Dendritic cell treated with granulocyte-macrophage colony-stimulating factor and Interleukin-4, amounts not matched to agents 40 ng/mL and 50 ng/mL, for 4 days (primary cell): ENCODE measurements at regions of chr15 and their contacts with region 1.

Region 1: GRCh38 chr15:41989259-41989933 is 17.0 kb upstream of the EHD4 start:
- H3K4me3 Mint-ChIP-seq: no peak overlapping the region
- H3K27ac Mint-ChIP-seq: no peak overlapping the region
- H3K4me1 Mint-ChIP-seq: peaks cover 7% of the 10 kb centered on the region
- H3K27me3 Mint-ChIP-seq: peaks cover 7% of the 10 kb centered on the region

Region 2: GRCh38 chr15:42046579-42046978 is 57.2 kb after region 1 on chr15:
- intact Hi-C with region 1: no loop called
- H3K4me3 Mint-ChIP-seq: no peak overlapping the region
- H3K27ac Mint-ChIP-seq: no peak overlapping the region
- H3K4me1 Mint-ChIP-seq: peaks cover 12% of the 10 kb centered on the region
- H3K27me3 Mint-ChIP-seq: peaks cover 4% of the 10 kb centered on the region

Region 3: GRCh38 chr15:42059661-42060476 is 70.5 kb after region 1 on chr15:
- intact Hi-C with region 1: loop called (anchors 1 kb)
- H3K4me3 Mint-ChIP-seq: no peak overlapping the region
- H3K27ac Mint-ChIP-seq: no peak overlapping the region
- H3K4me1 Mint-ChIP-seq: peaks cover 29% of the 10 kb centered on the region
- H3K27me3 Mint-ChIP-seq: peaks cover 22% of the 10 kb centered on the region